Endothelial cell of umbilical vein (primary cell): ENCODE measurements at regions of chr18 and their contacts with region 1.

Region 1: GRCh38 chr18:49858309-49859020 is 45.1 kb upstream of the ACAA2 start:
- DNase-seq: peak; percentile 77
- H3K4me3 ChIP-seq: no peak overlapping the region
- H3K27ac ChIP-seq: peak overlapping the region; percentile 19
- H3K4me1 ChIP-seq: peaks cover 5% of the 10 kb centered on the region
- H3K27me3 ChIP-seq: no peaks in the 10 kb centered on the region
- CTCF ChIP-seq: peak; percentile 83 to 86
- POLR2A ChIP-seq: no peak

Region 2: DNA sequence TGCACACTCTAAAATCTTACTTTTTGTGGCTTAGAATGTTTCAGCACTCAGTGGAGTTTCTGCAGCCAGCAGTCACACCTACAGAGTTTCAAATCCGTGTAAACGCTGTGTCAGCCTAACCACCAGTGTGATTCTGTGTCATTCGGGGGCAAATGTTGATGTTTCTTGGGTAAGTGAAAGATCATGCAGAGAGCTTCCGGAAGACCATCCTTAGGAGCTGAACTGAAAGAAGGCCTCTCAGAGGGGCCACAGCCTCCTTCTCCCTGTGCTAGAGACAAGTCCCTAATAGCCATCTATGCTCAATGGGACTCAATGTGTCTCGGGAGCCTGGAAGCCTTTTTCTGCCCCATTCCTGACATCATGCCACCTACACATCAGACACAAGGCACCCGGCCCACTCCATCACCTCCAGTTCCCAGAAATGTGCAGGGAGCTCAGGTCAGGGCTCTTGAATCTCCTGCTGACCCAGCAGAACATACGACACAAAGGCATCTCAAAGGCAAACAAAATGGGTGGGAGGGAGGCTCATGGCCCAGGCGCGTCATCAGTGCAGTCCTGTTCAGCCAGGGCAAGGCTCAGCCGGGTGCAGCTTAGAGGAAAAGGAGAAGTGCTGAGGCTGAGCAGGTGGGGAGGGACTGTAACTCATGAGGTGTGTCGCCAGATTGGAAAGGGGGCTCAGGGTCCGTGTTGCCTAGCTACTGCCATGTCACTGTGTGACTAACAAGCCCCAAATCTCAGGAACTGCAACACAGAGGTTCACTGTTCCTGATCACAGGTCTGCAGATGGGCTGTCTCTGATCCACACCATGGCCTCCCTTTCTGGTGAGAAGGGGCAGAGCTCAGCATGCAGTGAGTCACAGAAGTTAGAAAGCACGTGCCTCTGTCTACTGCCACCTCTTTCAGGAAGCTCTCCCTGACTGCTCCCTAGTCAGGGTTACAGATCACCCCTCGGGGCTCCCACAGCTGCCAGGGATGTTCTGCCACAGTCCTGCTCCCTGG is 989.7 kb before region 1 on chr18:
- CTCF ChIA-PET with region 1: no interaction called
- POLR2A ChIA-PET with region 1: no interaction called
- dilution Hi-C with region 1: no loop called
- intact Hi-C with region 1: no loop called
- DNase-seq: no peak
- H3K4me3 ChIP-seq: no peak overlapping the region
- H3K27ac ChIP-seq: no peak overlapping the region
- H3K4me1 ChIP-seq: peaks cover 12% of the 10 kb centered on the region
- H3K27me3 ChIP-seq: no peaks in the 10 kb centered on the region
- CTCF ChIP-seq: no peak
- POLR2A ChIP-seq: no peak

Region 3: DNA sequence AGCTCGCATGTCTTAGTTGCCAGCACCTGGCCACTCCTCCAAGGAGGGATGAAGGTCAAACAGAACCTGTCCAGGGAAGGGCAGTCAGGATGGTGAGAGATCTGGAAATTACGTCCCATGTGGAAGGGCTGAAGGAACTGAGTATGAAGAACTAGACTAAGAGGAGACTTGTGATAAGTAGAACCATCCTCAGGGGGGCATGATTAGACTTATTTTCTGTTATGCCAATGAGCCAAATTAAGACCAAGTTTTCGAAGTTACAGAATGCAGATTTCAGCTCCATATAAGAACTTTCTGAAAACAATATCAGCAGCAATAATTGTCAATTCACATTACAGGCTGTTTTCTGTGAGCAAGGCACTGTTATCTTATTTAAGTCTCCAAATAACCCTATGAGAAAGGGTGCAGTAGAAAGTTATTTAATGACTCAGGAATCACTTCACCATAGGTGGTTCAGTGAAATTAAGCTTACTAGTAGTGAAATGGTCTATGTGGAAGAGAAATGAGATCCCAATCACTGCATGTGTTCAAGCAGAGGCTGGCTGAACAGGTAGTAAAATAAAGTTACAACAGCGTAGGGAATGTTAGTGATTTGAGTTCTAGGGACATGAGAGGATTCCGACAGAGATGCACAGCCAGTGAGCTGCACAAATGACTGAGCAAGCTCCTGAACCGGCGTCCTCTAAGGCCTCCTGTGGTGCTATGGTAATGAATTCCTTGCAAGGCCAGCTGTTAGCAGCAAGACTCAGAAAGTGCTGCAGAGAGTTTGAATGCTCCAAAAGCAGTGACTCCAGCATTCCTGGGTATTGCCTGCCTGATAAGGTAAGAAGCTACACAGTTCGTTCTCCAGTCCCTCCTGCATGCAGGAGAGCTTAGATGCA is 393.5 kb before region 1 on chr18:
- CTCF ChIA-PET with region 1: interaction called, 33 read pairs
- POLR2A ChIA-PET with region 1: no interaction called
- dilution Hi-C with region 1: no loop called
- intact Hi-C with region 1: loop called (anchors 1 kb)
- DNase-seq: peak; percentile 29
- H3K4me3 ChIP-seq: no peak overlapping the region
- H3K27ac ChIP-seq: no peak overlapping the region
- H3K4me1 ChIP-seq: peaks cover 6% of the 10 kb centered on the region
- H3K27me3 ChIP-seq: peaks cover 0 to 1% of the 10 kb centered on the region in 2 experiments
- CTCF ChIP-seq: no peak
- POLR2A ChIP-seq: no peak

Region 4: GRCh38 chr18:49524349-49524748 is 334.1 kb before region 1 on chr18:
- CTCF ChIA-PET with region 1: interaction called, 452 read pairs
- POLR2A ChIA-PET with region 1: no interaction called
- dilution Hi-C with region 1: loop called (anchors 25 kb)
- intact Hi-C with region 1: no loop called
- DNase-seq: peak; percentile 5
- H3K4me3 ChIP-seq: no peak overlapping the region
- H3K27ac ChIP-seq: no peak overlapping the region
- H3K4me1 ChIP-seq: no peaks in the 10 kb centered on the region
- H3K27me3 ChIP-seq: peaks cover 0 to 3% of the 10 kb centered on the region in 2 experiments
- CTCF ChIP-seq: no peak
- POLR2A ChIP-seq: no peak

Region 5: DNA sequence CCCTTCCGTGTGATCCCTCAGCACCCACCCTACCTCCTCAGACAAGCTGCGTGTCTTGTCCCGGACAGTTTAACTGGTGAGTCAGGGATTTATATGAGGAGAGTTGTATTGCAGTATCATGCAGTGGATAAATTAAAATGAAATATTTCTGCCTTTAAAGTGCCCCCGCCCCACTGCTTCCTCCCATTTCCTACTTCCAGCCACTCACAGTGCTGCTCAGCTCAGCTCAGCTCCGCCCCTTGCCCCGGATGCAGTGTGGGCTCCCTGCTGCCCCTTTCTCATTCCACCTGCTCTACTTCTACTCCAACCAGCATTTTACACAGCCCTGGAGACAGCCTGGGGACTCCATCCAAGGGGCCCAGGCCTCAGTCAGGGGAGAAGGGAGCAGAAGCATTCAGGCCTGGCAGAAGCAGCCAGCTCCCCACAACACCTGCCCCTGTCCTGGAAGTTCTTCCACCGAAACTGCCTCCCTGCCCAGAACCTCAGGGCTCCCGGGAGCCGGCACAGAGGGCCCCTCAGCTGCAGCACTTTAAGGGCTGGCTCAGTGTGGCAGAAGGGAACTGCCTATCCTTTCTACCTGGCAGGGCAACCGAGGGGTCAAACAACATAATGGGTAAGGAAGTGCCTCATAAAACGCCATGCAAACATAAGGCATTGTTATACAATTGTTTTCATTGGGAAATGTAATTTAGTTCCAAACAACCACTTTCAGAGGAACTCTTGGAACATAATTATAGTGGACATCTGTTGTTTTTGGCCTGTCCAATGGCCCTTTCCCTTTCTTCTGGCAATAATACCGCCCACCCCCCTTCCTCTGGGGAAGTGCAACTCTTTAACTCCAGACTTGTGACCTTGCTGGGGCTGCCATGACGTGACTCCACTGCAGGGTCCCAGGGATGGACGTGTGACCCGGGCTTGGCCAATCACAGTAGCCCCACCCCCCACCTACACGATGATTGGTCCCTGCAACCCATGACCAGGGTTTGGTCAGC is 194.3 kb before region 1 on chr18:
- CTCF ChIA-PET with region 1: no interaction called
- POLR2A ChIA-PET with region 1: no interaction called
- dilution Hi-C with region 1: no loop called
- intact Hi-C with region 1: loop called (anchors 5 kb)
- DNase-seq: peak; percentile 97
- H3K4me3 ChIP-seq: peak overlapping the region in 1 of 3 experiments; percentile 7
- H3K27ac ChIP-seq: peak overlapping the region; percentile 83
- H3K4me1 ChIP-seq: peaks cover 40% of the 10 kb centered on the region
- H3K27me3 ChIP-seq: peaks cover 4% of the 10 kb centered on the region in 2 experiments
- CTCF ChIP-seq: no peak
- POLR2A ChIP-seq: peak; percentile 67

Region 6: DNA sequence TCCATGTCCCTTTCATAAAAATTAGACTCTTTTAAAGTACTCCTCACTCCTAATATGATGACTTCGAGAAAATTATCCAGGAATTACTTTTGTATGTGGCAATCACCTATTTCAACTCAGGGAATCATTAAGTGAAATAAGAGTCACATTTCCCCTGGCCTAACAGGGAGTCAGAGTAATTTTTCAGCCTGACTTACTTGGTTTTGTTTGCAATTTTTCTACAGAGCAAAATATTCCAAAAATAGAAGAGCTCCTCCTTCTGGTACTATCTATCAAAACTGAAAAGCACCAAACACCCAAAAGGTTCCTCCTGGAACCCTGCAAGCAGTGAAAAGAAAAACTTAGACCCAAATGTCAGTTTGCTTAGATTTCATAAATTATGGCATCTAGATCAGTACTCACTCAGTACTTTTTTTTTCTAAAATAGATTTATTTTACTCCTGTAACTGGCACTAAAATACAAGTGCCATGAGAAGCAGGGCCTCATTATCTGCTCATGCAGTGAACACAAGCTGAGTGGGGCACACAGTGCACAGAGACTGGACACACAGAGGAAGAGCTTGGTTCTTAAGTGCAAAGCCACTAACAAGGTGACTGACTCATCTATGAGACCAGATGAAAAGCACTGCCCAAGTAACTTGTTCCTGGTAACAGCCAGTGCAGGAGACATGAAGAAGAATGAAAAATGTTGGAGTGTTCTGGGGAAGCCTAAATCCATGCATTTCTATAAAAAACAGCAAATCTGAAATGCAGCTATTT is 73.9 kb before region 1 on chr18:
- CTCF ChIA-PET with region 1: interaction called, 26 read pairs
- POLR2A ChIA-PET with region 1: no interaction called
- dilution Hi-C with region 1: no loop called
- intact Hi-C with region 1: loop called (anchors 5 kb)
- DNase-seq: no peak
- H3K4me3 ChIP-seq: no peak overlapping the region
- H3K27ac ChIP-seq: no peak overlapping the region
- H3K4me1 ChIP-seq: peaks cover 8% of the 10 kb centered on the region
- H3K27me3 ChIP-seq: no peaks in the 10 kb centered on the region
- CTCF ChIP-seq: no peak
- POLR2A ChIP-seq: no peak

Region 7: GRCh38 chr18:49874238-49874637 is 15.8 kb after region 1 on chr18:
- CTCF ChIA-PET with region 1: interaction called, 14 read pairs
- POLR2A ChIA-PET with region 1: no interaction called
- dilution Hi-C with region 1: no loop called
- intact Hi-C with region 1: no loop called
- DNase-seq: no peak
- H3K4me3 ChIP-seq: no peak overlapping the region
- H3K27ac ChIP-seq: no peak overlapping the region
- H3K4me1 ChIP-seq: peaks cover 4% of the 10 kb centered on the region
- H3K27me3 ChIP-seq: peaks cover 15 to 16% of the 10 kb centered on the region in 2 experiments
- CTCF ChIP-seq: no peak
- POLR2A ChIP-seq: no peak